ENCODE measurements at regions of chr4 and their contacts with region 1.

Region 1: GRCh38 chr4:102780476-102781144 is 19.8 kb upstream of the MANBA start:
- DNase-seq: peak; percentile 73
- H3K4me3 Mint-ChIP-seq: no peak overlapping the region
- H3K27ac Mint-ChIP-seq: no peak overlapping the region
- H3K4me1 Mint-ChIP-seq: peaks cover 10% of the 10 kb centered on the region
- H3K27me3 Mint-ChIP-seq: no peaks in the 10 kb centered on the region
- CTCF ChIP-seq: no peak

Region 2: DNA sequence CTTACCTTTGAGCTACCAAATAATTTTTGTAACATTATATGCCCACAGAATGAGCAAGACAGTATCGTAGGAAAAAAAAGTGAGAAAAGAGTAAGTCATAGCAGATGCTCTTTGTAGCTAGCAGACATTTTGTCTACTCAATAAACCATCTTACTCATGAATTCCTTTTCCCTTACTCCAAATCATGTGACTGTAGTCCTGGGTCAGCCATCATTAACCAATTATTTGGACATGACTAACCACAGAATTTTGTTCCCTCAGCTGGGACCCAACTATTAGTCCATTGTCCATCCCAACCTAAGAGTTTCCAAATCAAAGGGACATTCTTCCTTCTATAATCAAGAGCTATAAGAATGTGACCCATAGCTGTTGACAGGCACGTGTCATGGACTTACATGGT is 35.4 kb after region 1 on chr4:
- CTCF ChIA-PET with region 1: no interaction called
- POLR2A ChIA-PET with region 1: interaction called, 10 read pairs
- intact Hi-C with region 1: no loop called
- DNase-seq: peak; percentile 51
- H3K4me3 Mint-ChIP-seq: no peak overlapping the region
- H3K27ac Mint-ChIP-seq: peak overlapping the region; percentile 29
- H3K4me1 Mint-ChIP-seq: peaks cover 57% of the 10 kb centered on the region
- H3K27me3 Mint-ChIP-seq: no peaks in the 10 kb centered on the region
- CTCF ChIP-seq: no peak

Measured in MCF 10A (cell line).